Endothelial cell of umbilical vein (primary cell): ENCODE measurements at regions of chrX and their contacts with region 1.

Region 1: GRCh38 chrX:68995780-68996551 is 167.1 kb downstream of the EFNB1 start:
- DNase-seq: peak; percentile 65
- H3K4me3 ChIP-seq: no peak overlapping the region
- H3K27ac ChIP-seq: no peak overlapping the region
- H3K4me1 ChIP-seq: peaks cover 23% of the 10 kb centered on the region
- H3K27me3 ChIP-seq: no peaks in the 10 kb centered on the region
- CTCF ChIP-seq: no peak
- POLR2A ChIP-seq: no peak

Region 2: DNA sequence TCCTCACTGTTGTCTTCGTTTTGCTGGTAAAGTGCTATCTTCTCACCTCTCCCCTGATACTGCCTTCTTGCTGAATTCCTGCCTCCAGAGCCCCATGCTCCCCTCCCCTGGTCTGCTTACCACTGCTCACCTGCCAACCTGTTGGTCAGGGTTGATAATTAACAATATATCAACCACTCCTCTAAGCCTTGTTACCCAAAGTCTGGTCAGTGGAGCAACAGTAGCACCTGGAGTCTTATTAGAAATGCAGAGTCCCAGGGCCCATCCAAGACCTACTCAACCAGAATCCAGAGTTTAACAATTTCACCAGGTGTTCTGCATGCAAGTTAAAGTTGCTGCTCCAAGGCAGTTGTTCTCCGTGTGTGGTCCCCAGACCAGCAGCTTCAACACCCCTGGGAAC is 112.2 kb before region 1 on chrX:
- CTCF ChIA-PET with region 1: no interaction called
- POLR2A ChIA-PET with region 1: no interaction called
- dilution Hi-C with region 1: no loop called
- intact Hi-C with region 1: no loop called
- DNase-seq: no peak
- H3K4me3 ChIP-seq: no peak overlapping the region
- H3K27ac ChIP-seq: no peak overlapping the region
- H3K4me1 ChIP-seq: no peaks in the 10 kb centered on the region
- H3K27me3 ChIP-seq: peaks cover 6 to 7% of the 10 kb centered on the region in 2 experiments
- CTCF ChIP-seq: no peak
- POLR2A ChIP-seq: no peak

Region 3: DNA sequence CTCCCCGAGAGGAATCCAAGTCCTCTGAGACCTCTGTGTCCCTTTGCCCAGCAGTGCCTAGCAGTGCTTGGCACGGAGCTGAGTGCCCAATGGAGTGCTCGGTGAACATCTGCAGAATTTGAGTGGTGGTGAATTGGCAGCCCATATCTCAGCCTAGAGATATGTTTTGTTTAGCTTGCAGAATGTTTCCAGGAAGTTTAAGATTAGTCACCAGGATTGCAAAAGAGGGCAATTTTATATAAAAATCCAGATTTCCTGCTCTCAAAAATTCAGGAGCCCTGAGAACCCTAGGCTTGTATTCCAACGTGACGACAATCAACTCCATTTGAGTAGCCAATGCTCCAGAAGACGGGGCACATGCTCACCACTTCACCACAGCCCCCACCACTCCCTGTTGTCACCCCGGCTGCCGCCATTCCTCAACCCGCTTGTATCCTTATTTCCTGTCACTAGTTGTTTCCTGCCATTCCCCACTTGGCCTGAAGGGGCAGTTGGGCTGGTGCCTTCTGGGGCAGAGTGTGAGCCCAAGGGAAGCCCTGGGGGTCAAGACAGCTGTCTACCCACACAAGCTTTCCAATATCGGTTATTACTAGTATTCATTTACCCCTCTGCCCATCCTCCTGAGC is 50.2 kb before region 1 on chrX:
- CTCF ChIA-PET with region 1: no interaction called
- POLR2A ChIA-PET with region 1: no interaction called
- dilution Hi-C with region 1: no loop called
- intact Hi-C with region 1: loop called (anchors 5 kb)
- DNase-seq: peak; percentile 54
- H3K4me3 ChIP-seq: no peak overlapping the region
- H3K27ac ChIP-seq: peak overlapping the region; percentile 16
- H3K4me1 ChIP-seq: peaks cover 9% of the 10 kb centered on the region
- H3K27me3 ChIP-seq: no peaks in the 10 kb centered on the region
- CTCF ChIP-seq: peak; percentile 27 to 41
- POLR2A ChIP-seq: no peak